Activated T-helper 1 cell treated with anti-CD3 and anti-CD28 coated beads, Interleukin-12 subunit alpha, Interleukin-12 subunit beta, Interleukin-2, Interleukin-4 antibody, amounts not matched to agents 30 ng/mL and 10 ng/mL and 1 ng/mL, durations not matched to agents 14 hours and 24 hours and 36 hours (primary cell): ENCODE measurements at regions of chrX and their contacts with region 1.

Region 1: DNA sequence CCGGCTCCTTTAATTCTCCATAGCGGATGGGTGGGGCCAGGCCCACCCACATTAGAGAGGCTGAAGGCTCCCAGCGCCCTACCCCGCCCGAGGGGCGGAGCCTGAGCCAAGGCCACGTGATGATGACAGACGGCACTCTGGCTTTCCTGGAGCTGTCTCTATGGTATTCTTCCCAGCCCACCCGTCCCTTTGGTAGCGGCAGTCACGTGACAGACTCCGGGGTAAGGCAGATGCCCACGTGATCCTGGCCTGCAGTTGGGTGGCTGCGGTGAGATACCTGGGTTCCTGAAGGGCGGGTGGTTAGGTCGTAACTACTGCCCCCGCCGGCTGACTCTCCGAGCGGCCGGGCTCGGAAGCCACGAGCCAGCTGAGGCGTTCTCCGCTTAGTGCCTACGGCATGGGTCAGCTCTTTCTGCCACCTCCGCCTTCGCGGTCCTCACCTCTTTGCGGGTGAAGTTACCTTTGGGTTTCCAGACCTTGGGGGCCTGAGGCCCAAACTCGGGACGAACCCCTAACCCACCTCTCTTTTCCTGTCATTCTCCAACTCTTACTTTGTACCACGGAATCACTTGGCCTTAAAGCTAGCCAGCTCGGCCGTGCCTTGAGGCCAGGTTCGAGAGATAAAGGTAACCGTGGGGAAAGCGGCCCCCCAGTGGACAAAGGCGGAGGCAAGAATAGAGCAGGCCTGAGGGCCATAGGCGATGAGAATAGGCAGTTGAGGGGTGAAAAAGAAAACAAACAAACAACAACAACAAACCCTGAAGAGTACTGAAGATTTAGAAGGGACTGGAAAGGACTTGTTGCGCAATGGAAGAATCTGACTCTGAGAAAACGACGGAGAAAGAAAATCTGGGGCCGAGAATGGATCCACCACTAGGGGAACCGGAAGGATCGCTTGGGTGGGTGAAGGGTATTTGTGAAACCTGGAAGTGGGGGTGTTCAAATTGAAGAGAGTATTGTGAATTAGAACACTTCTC is at the start of gene RRAGB:
- DNase-seq: peak; percentile 84
- H3K4me3 Mint-ChIP-seq: peak within 1 kb of the TSS; percentile 89
- H3K27ac Mint-ChIP-seq: peak within 1 kb of the TSS; percentile 73
- H3K4me1 Mint-ChIP-seq: peaks cover 36% of the 10 kb centered on the region
- H3K27me3 Mint-ChIP-seq: no peaks in the 10 kb centered on the region
- total RNA-seq, gene RRAGB: 4.4 and 6.1 TPM in 2 replicates

Region 2: GRCh38 chrX:55268091-55268490 is 449.7 kb before region 1 on chrX:
- intact Hi-C with region 1: no loop called
- DNase-seq: no peak
- H3K4me3 Mint-ChIP-seq: no peak overlapping the region
- H3K27ac Mint-ChIP-seq: no peak overlapping the region
- H3K4me1 Mint-ChIP-seq: no peaks in the 10 kb centered on the region
- H3K27me3 Mint-ChIP-seq: no peaks in the 10 kb centered on the region

Region 3: GRCh38 chrX:55907968-55908607 is 190.3 kb after region 1 on chrX:
- intact Hi-C with region 1: loop called (anchors 1 kb)
- DNase-seq: peak; percentile 33
- H3K4me3 Mint-ChIP-seq: peak overlapping the region; percentile 85
- H3K27ac Mint-ChIP-seq: peak overlapping the region; percentile 92
- H3K4me1 Mint-ChIP-seq: peaks cover 31% of the 10 kb centered on the region
- H3K27me3 Mint-ChIP-seq: no peaks in the 10 kb centered on the region

Region 4: GRCh38 chrX:56248492-56248891 is 530.7 kb after region 1 on chrX:
- intact Hi-C with region 1: loop called (anchors 5 kb)
- DNase-seq: peak; percentile 29
- H3K4me3 Mint-ChIP-seq: no peak overlapping the region
- H3K27ac Mint-ChIP-seq: no peak overlapping the region
- H3K4me1 Mint-ChIP-seq: peaks cover 9% of the 10 kb centered on the region
- H3K27me3 Mint-ChIP-seq: no peaks in the 10 kb centered on the region

Region 5: DNA sequence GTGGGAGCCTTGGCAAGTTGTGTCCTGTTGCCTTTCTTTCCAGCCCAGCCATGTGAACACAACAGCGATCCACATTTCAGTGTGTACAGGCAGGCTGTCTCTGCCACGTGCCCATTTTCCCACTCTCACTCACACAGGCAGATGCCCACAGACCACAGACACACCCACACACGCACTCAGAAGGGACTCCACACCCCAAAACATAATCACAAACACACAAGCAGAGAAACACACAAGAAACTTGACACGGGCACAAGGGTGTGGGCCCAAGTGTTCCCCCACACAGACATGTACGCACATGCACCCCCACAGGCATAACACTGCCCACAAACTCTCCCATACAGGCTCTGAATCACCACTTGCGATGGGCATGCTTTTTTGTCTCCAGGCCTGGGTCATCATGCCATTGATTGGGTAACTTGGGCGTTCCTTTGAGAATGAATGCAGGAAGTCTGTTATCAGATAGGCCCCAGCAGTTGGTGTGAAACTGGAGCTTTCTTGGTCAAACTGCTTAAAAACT is 1095.6 kb after region 1 on chrX:
- intact Hi-C with region 1: loop called (anchors 2 kb)
- DNase-seq: peak; percentile 32
- H3K4me3 Mint-ChIP-seq: peak overlapping the region; percentile 80
- H3K27ac Mint-ChIP-seq: peak overlapping the region; percentile 97
- H3K4me1 Mint-ChIP-seq: peaks cover 38% of the 10 kb centered on the region
- H3K27me3 Mint-ChIP-seq: no peaks in the 10 kb centered on the region

Region 6: DNA sequence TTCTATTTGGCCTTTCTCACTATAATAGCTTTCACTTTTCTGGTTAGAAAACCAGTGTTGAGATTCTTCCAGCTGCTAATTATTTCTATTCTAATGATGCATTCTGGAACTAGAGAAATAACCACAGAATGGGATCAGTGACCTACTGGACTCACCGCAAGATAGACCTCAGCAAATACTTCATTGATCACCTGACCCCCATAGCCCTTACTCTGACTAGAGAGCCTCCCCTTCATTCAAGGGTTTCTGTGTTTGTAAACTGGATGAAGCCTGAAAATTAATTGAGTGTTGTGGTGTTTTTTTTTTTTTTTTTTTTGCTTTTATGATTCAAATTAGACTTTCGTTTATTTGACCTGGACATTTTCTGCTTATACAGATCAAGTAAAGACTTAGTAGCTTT is 1108.2 kb after region 1 on chrX:
- intact Hi-C with region 1: no loop called
- DNase-seq: no peak
- H3K4me3 Mint-ChIP-seq: no peak overlapping the region
- H3K27ac Mint-ChIP-seq: no peak overlapping the region
- H3K4me1 Mint-ChIP-seq: no peaks in the 10 kb centered on the region
- H3K27me3 Mint-ChIP-seq: no peaks in the 10 kb centered on the region